ENCODE measurements at regions of chr1 and their contacts with region 1.

Region 1: DNA sequence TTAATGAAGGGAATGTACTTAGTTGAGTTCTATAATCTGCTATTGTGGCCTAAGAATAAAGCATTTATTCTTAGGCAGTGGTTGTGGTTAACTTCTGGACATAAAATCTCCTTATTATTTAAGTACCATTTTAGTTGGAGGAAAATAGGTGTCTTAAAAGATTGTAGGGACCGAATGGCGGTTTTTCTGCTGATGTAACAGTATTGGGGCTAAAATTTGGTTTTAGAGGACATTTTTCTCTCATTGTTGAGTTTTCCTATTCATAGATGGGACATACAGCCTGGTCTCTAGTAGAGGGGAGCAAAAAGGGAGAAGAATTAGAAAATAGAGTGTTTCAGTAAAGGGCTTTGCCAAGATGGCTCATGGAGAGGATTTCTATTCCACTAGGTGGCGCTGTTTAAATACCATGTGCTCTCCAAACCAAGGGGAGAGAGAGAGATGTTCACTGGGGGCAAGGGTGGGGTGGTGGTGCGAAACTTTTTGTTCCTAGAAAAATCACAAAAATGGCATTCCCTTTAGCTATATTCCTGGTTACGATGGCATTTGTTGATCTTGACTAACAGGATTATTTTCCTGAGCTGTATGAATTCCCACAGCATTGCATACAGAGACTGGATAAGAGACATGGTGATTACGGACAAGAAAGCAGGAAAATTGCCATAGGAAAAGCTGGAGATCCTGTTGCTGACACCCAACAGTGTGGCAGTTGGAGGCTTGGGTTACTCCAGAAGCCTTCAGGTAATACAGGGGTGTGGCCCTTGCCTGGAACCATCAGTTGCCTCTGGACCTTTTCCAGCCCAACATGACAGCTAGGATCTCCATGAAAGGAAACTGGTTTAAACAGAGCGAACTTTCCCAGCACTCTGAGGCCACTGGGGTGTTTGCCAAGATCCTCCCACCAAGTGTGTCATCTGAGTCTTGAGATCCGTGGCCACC is 18.2 kb upstream of the FCGR2A start:
- DNase-seq: peak; percentile 61
- CTCF ChIP-seq: peak; percentile 72

Region 2: DNA sequence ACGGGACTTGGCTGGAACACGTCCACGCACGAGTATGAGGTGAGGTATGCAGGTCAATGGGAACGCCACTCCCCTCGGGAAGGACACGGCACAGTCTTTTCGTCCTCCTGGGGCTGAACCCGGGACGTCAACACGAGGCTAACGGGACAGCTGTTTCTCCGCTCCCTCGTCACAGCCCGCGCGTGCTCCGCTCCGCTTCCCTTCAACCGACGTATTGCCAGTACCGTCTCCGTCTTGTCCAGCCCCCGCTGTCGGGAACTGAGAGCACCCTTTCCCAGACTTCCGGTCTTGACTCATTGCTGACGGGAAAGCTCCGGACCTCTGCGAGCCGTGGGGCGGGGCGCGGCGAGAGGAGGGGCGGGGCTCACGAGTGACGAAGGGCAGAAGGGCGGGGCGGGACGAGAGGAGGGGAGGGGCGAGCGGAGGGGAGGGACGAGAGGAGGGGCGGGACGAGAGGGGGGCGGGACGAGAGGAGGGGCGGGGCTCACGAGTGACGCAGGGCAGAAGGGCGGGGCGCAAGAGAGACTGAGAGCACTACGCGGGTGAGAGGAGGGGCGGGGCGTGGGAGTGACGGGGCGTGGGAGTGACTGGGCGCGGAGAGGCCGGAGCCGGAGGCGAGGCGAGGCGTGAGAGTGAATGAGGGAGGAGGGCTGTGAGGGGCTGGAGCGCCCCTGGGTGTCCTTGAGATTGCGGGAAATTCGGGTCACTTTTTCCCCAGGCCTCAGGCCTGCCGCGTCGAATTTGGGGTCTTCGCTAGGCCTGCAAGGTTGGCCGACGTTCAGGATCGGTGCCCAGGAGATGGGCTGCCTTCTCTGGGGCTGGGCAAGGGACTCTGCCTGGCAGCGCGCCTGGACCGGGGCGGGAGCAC is 97.1 kb before region 1 on chr1:
- CTCF ChIA-PET with region 1: no interaction called
- POLR2A ChIA-PET with region 1: no interaction called
- DNase-seq: peak; percentile 94
- CTCF ChIP-seq: no peak

Region 3: DNA sequence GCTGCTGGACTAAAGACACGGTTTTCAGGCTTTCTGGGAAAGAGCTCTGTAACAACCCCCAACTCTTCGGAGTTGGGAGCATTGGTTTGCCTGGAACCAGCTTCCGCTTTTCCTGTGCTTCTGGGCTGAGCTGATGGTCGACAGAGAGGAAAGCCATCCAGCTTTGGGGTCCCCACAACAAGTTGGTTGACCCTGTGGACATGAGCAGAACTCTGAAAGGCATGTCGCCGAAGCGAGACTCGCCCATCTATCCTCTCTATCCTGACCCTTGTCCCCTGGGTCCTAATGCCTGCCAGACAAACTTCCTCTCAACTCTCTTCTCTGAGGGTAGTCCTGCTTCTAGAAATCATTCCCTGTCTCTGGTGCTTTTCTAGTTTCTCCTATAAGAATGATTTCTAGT is 13.7 kb before region 1 on chr1:
- CTCF ChIA-PET with region 1: interaction called, 17 read pairs
- POLR2A ChIA-PET with region 1: no interaction called
- DNase-seq: no peak
- CTCF ChIP-seq: no peak

Region 4: DNA sequence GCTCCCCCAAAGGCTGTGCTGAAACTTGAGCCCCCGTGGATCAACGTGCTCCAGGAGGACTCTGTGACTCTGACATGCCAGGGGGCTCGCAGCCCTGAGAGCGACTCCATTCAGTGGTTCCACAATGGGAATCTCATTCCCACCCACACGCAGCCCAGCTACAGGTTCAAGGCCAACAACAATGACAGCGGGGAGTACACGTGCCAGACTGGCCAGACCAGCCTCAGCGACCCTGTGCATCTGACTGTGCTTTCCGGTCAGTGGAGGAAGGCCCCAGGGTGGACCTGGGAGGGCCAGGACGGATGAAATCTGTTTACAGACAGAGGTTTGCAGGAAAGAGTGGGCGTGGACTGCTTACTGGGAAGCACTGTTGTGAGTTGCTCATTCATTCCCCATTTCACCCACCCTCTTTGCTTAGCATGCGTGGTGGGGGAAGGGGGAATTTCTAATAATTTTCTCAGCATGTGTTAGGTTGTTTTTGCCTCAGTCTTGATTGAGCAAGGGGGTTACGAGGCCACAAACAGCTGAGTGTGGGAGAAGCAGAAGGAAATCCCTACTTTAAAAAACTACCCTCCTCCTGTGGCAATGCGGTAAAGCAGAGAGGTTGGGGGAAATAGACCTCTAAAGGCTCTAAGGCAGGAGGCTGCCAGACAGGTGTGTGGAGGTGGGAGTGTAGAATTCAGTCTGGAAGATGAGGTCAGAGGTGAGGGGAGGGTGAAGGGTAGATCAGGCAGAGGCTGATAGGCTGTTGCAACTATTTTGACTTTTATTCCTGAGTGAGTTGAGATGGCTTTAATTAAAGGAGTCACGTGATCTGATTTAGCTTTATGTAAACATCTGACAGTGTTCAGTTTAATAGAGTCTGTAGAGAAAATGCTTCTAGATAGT is 19.5 kb after region 1 on chr1:
- CTCF ChIA-PET with region 1: interaction called, 14 read pairs
- POLR2A ChIA-PET with region 1: no interaction called
- DNase-seq: no peak
- CTCF ChIP-seq: no peak